ENCODE measurements at regions of chr6 and their contacts with region 1.

Region 1: DNA sequence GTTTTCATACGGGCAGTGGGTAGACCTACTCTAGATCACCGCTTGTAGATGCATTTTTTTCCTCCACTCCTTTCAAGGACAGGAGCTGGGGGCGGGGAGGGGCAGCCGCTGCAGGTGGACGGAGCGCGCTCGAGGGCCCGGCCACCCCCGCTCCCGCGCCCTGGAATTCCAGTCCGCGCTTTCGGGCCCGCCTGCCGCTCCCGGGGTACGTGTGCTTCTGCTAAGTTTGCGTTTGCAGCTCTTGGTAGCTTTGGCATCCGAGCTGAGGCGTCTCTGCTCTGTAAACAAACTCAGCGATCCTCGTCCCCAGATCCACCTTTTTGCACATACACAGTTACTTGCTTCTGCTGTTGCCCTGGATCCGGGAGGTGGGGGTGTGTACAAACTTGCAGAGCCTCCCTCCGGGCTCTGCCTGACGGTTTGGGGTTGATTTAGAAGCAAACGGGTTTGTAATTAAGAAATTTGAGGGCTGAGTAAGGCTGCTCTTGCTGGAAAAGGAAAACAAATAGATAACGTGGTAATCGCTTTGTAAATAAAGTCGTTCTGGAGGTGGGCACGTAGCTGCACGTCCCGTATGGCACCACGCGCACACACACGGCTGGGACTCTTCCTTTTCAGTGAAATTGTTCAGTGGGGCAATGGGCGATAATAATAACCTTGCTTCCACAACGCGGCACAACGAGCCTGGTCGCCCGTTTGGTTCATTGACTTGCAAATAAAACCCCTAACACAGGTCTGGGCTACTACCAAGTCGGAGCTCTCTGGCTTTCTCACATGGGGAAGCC is 976 bp upstream of the CITED2 start:
- DNase-seq: peak; percentile 99
- H3K4me3 ChIP-seq: peak overlapping the region; percentile 93
- CTCF ChIP-seq: no peak

Region 2: GRCh38 chr6:139407718-139408222 is 32.3 kb after region 1 on chr6:
- CTCF ChIA-PET with region 1: interaction called, 3 read pairs
- POLR2A ChIA-PET with region 1: interaction called, 34 read pairs
- DNase-seq: peak; percentile 100
- H3K4me3 ChIP-seq: no peak overlapping the region
- CTCF ChIP-seq: no peak

Region 3: GRCh38 chr6:139597771-139598755 is 222.6 kb after region 1 on chr6:
- CTCF ChIA-PET with region 1: interaction called, 4 read pairs
- POLR2A ChIA-PET with region 1: interaction called, 52 read pairs
- DNase-seq: peak; percentile 98
- H3K4me3 ChIP-seq: no peak overlapping the region
- CTCF ChIP-seq: no peak

Region 4: GRCh38 chr6:139753198-139753861 is 377.9 kb after region 1 on chr6:
- CTCF ChIA-PET with region 1: interaction called, 9 read pairs
- POLR2A ChIA-PET with region 1: interaction called, 46 read pairs
- DNase-seq: peak; percentile 83
- H3K4me3 ChIP-seq: no peak overlapping the region
- CTCF ChIP-seq: no peak

Region 5: GRCh38 chr6:139863346-139863745 is 487.9 kb after region 1 on chr6:
- CTCF ChIA-PET with region 1: no interaction called
- POLR2A ChIA-PET with region 1: interaction called, 13 read pairs
- DNase-seq: peak; percentile 54
- H3K4me3 ChIP-seq: no peak overlapping the region
- CTCF ChIP-seq: no peak

Region 6: DNA sequence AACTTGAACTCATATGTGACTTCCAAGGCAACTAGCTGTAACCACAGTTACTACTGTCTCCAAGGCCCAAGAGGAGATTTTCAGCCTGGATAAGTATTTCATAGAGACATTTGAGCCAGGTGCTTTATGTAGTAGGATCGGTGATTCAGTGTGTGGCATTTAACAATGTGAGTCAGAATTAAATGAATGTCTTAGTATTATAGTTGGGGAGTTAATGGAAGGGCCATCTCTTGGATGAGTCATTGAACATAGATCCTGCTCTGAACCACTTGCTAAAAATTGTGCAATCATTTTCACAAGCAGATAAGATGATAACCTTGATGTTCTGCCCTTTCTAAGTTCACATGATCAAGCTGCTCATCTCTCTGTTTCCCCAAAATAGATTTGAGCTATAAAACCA is 667.9 kb after region 1 on chr6:
- CTCF ChIA-PET with region 1: no interaction called
- POLR2A ChIA-PET with region 1: interaction called, 16 read pairs
- DNase-seq: peak; percentile 77
- H3K4me3 ChIP-seq: no peak overlapping the region
- CTCF ChIP-seq: no peak

Region 7: GRCh38 chr6:140078561-140079125 is 703.2 kb after region 1 on chr6:
- CTCF ChIA-PET with region 1: no interaction called
- POLR2A ChIA-PET with region 1: interaction called, 15 read pairs
- DNase-seq: peak; percentile 95
- H3K4me3 ChIP-seq: no peak overlapping the region
- CTCF ChIP-seq: no peak

Measured in AG04449 (cell line).